Vagina (tissue), 2 donors: ENCODE measurements at regions of chr1 and their contacts with region 1.

Region 1: GRCh38 chr1:237774246-237774645 is 116.5 kb downstream of the ZP4 start:
- DNase-seq: no peak
- H3K4me3 ChIP-seq: no peak overlapping the region
- H3K27ac ChIP-seq: no peak overlapping the region
- H3K4me1 ChIP-seq: no peaks in the 10 kb centered on the region
- H3K27me3 ChIP-seq: no peaks in the 10 kb centered on the region
- CTCF ChIP-seq: no peak
- POLR2A ChIP-seq: no peak

Region 2: GRCh38 chr1:237834461-237834860 is 60.2 kb after region 1 on chr1:
- intact Hi-C with region 1: loop called (anchors 2 kb)
- DNase-seq: no peak
- H3K4me3 ChIP-seq: no peak overlapping the region
- H3K27ac ChIP-seq: no peak overlapping the region
- H3K4me1 ChIP-seq: no peaks in the 10 kb centered on the region
- H3K27me3 ChIP-seq: no peaks in the 10 kb centered on the region
- CTCF ChIP-seq: no peak
- POLR2A ChIP-seq: no peak